Naive thymus-derived CD4-positive, alpha-beta T cell (primary cell): ENCODE measurements at regions of chr11 and their contacts with region 1.

Region 1: DNA sequence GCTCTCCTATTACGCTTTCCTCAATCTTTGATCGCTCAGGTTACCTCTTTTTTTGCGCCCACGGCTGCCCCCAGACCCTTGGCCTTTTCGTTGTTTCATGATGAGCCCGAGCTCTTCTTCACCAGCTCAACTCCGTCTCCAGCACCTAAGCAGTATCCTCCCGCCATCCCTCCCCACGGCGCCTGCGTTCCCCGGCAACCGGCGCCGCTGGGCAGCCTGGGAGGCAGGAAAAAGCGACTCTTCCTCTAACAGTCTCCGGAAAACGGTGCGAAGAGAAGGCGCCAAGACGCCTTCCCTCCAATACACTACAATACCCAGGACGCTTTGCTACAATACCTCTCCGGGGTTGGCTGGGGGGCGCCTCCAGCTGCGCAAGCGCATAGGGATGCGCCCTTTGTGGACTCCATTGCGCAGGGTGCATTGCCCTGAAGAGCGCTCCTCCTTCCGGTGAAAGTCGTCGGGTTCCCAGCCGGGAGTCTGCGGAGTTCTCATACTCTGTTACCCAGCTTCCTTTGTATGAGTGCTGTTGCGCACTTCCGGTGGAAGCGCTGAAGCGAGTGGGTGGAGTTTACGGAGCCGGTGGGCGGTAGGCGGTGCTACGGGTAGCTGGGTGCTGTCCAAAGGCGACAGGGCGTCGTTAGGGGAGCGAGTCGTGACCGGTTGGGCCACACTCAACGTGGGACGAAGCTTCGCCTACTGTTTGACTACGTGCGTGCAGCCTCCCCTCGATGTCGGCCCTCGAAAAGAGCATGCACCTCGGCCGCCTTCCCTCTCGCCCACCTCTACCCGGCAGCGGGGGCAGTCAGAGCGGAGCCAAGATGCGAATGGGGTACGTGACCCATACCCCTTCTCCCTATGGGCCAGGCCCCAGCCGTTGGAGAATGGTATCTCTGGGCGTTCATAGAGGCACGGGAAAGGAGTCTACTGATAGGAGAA is at the starts of genes C2CD3 and PPME1:
- DNase-seq: peak; percentile 83 to 99 (median 98)
- ATAC-seq: peak; percentile 96
- H3K4me3 ChIP-seq: peak within 1 kb of the TSS; percentile 73
- H3K4me3 Mint-ChIP-seq: no peak within 1 kb of the TSS
- H3K27ac ChIP-seq: peak within 1 kb of the TSS; percentile 76
- H3K27ac Mint-ChIP-seq: no peak within 1 kb of the TSS
- H3K4me1 ChIP-seq: peaks cover 30 to 32% of the 10 kb centered on the region in 2 donors
- H3K4me1 Mint-ChIP-seq: peaks cover 5 to 32% (median 18%) of the 10 kb centered on the region in 7 donors
- H3K27me3 ChIP-seq: no peaks in the 10 kb centered on the region
- H3K27me3 Mint-ChIP-seq: no peaks in the 10 kb centered on the region
- total RNA-seq, gene C2CD3: 33.1 to 42.5 (median 40.7) TPM
- total RNA-seq, gene PPME1: 18.1 to 41.7 (median 20.2) TPM

Region 2: GRCh38 chr11:72814286-72815109 is 1356.5 kb before region 1 on chr11 and contains the start of gene ATG16L2:
- CTCF ChIA-PET with region 1: no interaction called
- POLR2A ChIA-PET with region 1: no interaction called
- intact Hi-C with region 1: loop called in 1 of 2 experiments (anchors 2 kb)
- DNase-seq: peak in 8 of 9 donors; percentile 53 to 96 (median 92)
- ATAC-seq: peak; percentile 89
- H3K4me3 ChIP-seq: peak within 1 kb of the TSS; percentile 89
- H3K4me3 Mint-ChIP-seq: peak within 1 kb of the TSS; percentile 97 to 99 (median 98)
- H3K27ac ChIP-seq: peak within 1 kb of the TSS; percentile 100
- H3K27ac Mint-ChIP-seq: peak within 1 kb of the TSS; percentile 86 to 99 (median 98)
- H3K4me1 ChIP-seq: peaks cover 18 to 23% of the 10 kb centered on the region in 2 donors
- H3K4me1 Mint-ChIP-seq: peaks cover 31 to 67% (median 52%) of the 10 kb centered on the region in 7 donors
- H3K27me3 ChIP-seq: no peaks in the 10 kb centered on the region
- H3K27me3 Mint-ChIP-seq: no peaks in the 10 kb centered on the region
- total RNA-seq, gene ATG16L2: 99.5 to 199 (median 166) TPM

Region 3: GRCh38 chr11:73760679-73761402 is 410.1 kb before region 1 on chr11 and contains the start of gene RAB6A:
- CTCF ChIA-PET with region 1: no interaction called
- POLR2A ChIA-PET with region 1: interaction called, 4 read pairs
- intact Hi-C with region 1: loop called (anchors 1 kb)
- DNase-seq: peak; percentile 94 to 100 (median 100)
- ATAC-seq: peak; percentile 94
- H3K4me3 ChIP-seq: peak within 1 kb of the TSS; percentile 87
- H3K4me3 Mint-ChIP-seq: peak within 1 kb of the TSS; percentile 89 to 98 (median 94)
- H3K27ac ChIP-seq: peak within 1 kb of the TSS; percentile 89
- H3K27ac Mint-ChIP-seq: peak within 1 kb of the TSS; percentile 86 to 98 (median 92)
- H3K4me1 ChIP-seq: peaks cover 14 to 15% of the 10 kb centered on the region in 2 donors
- H3K4me1 Mint-ChIP-seq: peaks cover 19 to 40% (median 32%) of the 10 kb centered on the region in 7 donors
- H3K27me3 ChIP-seq: no peaks in the 10 kb centered on the region
- H3K27me3 Mint-ChIP-seq: peaks cover 0 to 5% (median 0%) of the 10 kb centered on the region in 5 donors
- total RNA-seq, gene RAB6A: 54.9 to 94.5 (median 80.0) TPM

Region 4: DNA sequence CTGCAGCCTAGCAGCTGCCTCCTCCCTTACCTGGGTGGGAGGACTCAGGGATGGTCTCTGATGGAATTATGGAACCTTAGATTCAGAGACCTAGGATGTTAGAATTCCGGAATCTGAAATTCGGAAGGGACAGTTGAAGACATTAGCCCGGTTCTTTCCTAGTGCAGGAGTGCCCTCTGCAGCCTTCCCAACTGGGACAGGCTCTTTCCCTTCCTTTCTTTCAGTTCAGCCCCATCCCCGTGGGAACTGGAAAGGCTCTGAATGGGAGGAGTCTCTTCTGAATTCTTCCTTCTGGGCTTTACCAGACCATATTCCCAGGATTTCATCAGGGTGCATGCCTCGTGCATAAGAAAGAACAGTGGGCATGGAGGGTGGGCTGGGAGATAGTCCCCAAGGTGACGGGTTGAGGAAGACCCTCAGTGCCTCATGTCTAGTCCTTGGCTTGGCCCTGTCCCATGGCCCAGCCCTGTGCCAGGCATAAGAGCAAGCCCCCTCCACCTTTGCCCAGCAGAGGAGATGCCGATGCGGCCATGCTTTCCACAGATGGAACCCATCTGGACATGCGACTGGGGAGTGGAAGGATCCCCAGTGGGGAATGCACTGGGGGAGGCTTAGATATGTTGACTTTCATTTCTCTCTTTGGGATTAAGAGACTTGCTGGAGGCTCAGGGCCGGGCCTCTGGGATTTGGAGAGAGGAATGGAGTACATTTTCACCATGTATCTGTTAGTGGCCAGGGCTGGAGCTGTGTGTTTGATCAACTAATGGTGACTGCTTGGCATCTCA is 205.7 kb before region 1 on chr11:
- CTCF ChIA-PET with region 1: interaction called, 3 read pairs
- POLR2A ChIA-PET with region 1: interaction called, 7 read pairs
- intact Hi-C with region 1: loop called (anchors 1 kb)
- DNase-seq: no peak
- ATAC-seq: no peak
- H3K4me3 ChIP-seq: no peak overlapping the region
- H3K4me3 Mint-ChIP-seq: peak overlapping the region in 5 of 10 donors; percentile 18 to 59 (median 47)
- H3K27ac ChIP-seq: no peak overlapping the region
- H3K27ac Mint-ChIP-seq: peak overlapping the region in 8 of 9 donors; percentile 36 to 86 (median 74)
- H3K4me1 ChIP-seq: peaks cover 41 to 50% of the 10 kb centered on the region in 2 donors
- H3K4me1 Mint-ChIP-seq: peaks cover 29 to 57% (median 44%) of the 10 kb centered on the region in 7 donors
- H3K27me3 ChIP-seq: no peaks in the 10 kb centered on the region
- H3K27me3 Mint-ChIP-seq: no peaks in the 10 kb centered on the region

Region 5: GRCh38 chr11:74037309-74037708 is 133.7 kb before region 1 on chr11:
- CTCF ChIA-PET with region 1: no interaction called
- POLR2A ChIA-PET with region 1: no interaction called
- intact Hi-C with region 1: no loop called
- DNase-seq: no peak
- ATAC-seq: no peak
- H3K4me3 ChIP-seq: no peak overlapping the region
- H3K4me3 Mint-ChIP-seq: no peak overlapping the region
- H3K27ac ChIP-seq: no peak overlapping the region
- H3K27ac Mint-ChIP-seq: peak overlapping the region in 3 of 9 donors; percentile 33 to 74 (median 61)
- H3K4me1 ChIP-seq: no peaks in the 10 kb centered on the region
- H3K4me1 Mint-ChIP-seq: peaks cover 0 to 16% (median 9%) of the 10 kb centered on the region in 7 donors
- H3K27me3 ChIP-seq: no peaks in the 10 kb centered on the region
- H3K27me3 Mint-ChIP-seq: no peaks in the 10 kb centered on the region

Region 6: GRCh38 chr11:74232311-74232950 is 61.5 kb after region 1 on chr11:
- CTCF ChIA-PET with region 1: no interaction called
- POLR2A ChIA-PET with region 1: interaction called, 5 read pairs
- intact Hi-C with region 1: loop called in 1 of 2 experiments (anchors 1 kb)
- DNase-seq: peak in 7 of 9 donors; percentile 24 to 79 (median 68)
- ATAC-seq: peak; percentile 95
- H3K4me3 ChIP-seq: peak overlapping the region; percentile 5
- H3K4me3 Mint-ChIP-seq: peak overlapping the region in 8 of 10 donors; percentile 10 to 71 (median 40)
- H3K27ac ChIP-seq: peak overlapping the region; percentile 69
- H3K27ac Mint-ChIP-seq: peak overlapping the region in 2 of 9 donors; percentile 95 to 96
- H3K4me1 ChIP-seq: peaks cover 22 to 35% of the 10 kb centered on the region in 2 donors
- H3K4me1 Mint-ChIP-seq: peaks cover 7 to 46% (median 26%) of the 10 kb centered on the region in 7 donors
- H3K27me3 ChIP-seq: no peaks in the 10 kb centered on the region
- H3K27me3 Mint-ChIP-seq: no peaks in the 10 kb centered on the region

Region 7: DNA sequence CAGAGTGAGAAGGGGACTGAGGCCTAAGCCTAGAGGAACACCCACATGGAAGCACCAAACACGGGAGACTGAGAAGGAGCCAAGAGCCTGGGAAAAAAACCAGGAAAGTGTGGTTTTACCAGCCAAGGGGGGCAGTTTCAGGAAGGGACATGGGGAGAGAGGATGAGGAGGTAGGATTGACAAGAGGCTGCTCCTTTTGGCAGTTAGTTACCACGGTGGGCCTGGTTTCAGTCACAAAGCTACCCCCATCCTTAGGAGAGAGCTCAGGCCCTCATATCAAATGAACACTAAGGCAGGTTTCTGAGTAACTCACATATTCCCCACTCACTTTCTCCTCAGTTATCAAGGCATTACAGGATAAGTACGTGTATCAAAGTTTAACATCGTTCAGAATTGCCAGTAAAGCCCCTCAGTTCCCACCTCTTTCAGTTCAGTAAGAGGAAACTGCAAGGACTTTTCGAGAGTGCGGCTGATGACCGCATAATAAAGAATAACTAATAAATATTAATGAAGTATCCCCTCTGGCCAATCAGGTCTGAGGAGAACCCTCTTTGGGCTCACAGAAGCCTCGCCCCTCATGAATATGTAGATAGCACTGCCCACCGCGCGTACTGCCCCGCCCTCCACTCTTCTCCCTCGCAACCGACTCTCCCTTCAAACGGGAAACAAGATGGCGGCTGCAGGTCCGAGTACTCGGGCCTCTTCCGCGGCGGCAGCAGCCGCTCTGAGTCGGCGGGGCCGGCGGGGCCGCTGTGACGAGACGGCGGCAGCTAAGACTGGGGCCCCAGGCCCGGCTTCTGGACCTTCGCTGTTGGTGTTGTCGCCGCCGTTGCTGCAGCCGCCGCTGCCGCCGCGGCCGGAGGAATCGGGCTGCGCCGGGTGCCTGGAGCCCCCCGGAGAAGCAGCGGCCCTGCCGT is 577.5 kb after region 1 on chr11 and contains the start of gene RNF169:
- CTCF ChIA-PET with region 1: no interaction called
- POLR2A ChIA-PET with region 1: no interaction called
- intact Hi-C with region 1: loop called in 1 of 2 experiments (anchors 1 kb)
- DNase-seq: peak; percentile 59 to 88 (median 84)
- ATAC-seq: peak; percentile 100
- H3K4me3 ChIP-seq: peak within 1 kb of the TSS; percentile 73
- H3K4me3 Mint-ChIP-seq: peak within 1 kb of the TSS; percentile 81 to 99 (median 94)
- H3K27ac ChIP-seq: peak within 1 kb of the TSS; percentile 79
- H3K27ac Mint-ChIP-seq: peak within 1 kb of the TSS; percentile 84 to 97 (median 91)
- H3K4me1 ChIP-seq: peaks cover 16 to 29% of the 10 kb centered on the region in 2 donors
- H3K4me1 Mint-ChIP-seq: peaks cover 25 to 48% (median 42%) of the 10 kb centered on the region in 7 donors
- H3K27me3 ChIP-seq: no peaks in the 10 kb centered on the region
- H3K27me3 Mint-ChIP-seq: no peaks in the 10 kb centered on the region
- total RNA-seq, gene RNF169: 17.9 to 25.5 (median 22.2) TPM